ENCODE measurements at regions of chr10 and their contacts with region 1.

Region 1: GRCh38 chr10:49538381-49539319 is at the start of gene ERCC6:
- DNase-seq: peak; percentile 100
- ATAC-seq: peak; percentile 92
- H3K4me3 ChIP-seq: peak within 1 kb of the TSS; percentile 75
- H3K27ac ChIP-seq: peak within 1 kb of the TSS; percentile 75
- H3K4me1 ChIP-seq: peaks cover 49% of the 10 kb centered on the region
- H3K27me3 ChIP-seq: no peaks in the 10 kb centered on the region
- CTCF ChIP-seq: peak; percentile 36; the same call in 1 of the 2 replicates
- total RNA-seq, gene ERCC6: 36.7 and 43.0 TPM in 2 replicates

Region 2: GRCh38 chr10:49071160-49071761 is 467.4 kb before region 1 on chr10:
- CTCF ChIA-PET with region 1: no interaction called
- POLR2A ChIA-PET with region 1: no interaction called
- intact Hi-C with region 1: no loop called
- DNase-seq: no peak
- ATAC-seq: no peak
- H3K4me3 ChIP-seq: no peak overlapping the region
- H3K27ac ChIP-seq: no peak overlapping the region
- H3K4me1 ChIP-seq: no peaks in the 10 kb centered on the region
- H3K27me3 ChIP-seq: peaks cover 37% of the 10 kb centered on the region
- CTCF ChIP-seq: no peak

Region 3: DNA sequence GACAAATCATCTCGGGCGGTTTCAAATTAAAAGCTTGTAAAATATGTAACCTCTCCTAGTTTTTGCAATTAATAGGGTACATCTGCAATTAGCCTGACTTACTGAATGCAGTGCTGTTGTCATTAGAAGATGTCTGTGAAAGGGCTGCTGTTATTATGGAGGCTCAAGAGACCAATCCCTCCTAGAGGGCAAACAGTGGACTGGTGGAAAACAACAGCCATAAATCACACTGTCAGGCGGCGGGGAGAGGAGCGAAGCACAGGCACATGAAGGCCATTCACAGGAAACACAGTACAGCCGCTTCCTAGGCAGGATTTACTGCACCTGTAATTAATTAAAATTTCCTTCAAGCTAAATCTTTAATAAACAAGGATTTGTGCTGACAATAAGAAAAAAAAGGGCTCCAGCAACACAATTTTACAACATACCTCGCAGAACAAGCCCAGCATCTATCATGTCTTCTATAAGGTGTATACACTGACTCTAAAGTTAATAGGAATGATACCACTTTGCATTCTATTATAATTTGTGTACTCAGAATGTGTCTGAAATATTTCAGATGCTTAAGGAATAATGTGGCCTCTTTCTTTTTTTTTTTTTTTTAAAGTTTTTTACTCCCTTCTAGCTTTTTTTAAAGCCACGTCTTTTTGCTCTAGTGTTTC is 50.5 kb before region 1 on chr10:
- CTCF ChIA-PET with region 1: no interaction called
- POLR2A ChIA-PET with region 1: interaction called, 13 read pairs
- intact Hi-C with region 1: no loop called
- DNase-seq: no peak
- ATAC-seq: no peak
- H3K4me3 ChIP-seq: no peak overlapping the region
- H3K27ac ChIP-seq: no peak overlapping the region
- H3K4me1 ChIP-seq: no peaks in the 10 kb centered on the region
- H3K27me3 ChIP-seq: no peaks in the 10 kb centered on the region
- CTCF ChIP-seq: no peak

Region 4: GRCh38 chr10:49552249-49552672 is 13.6 kb after region 1 on chr10:
- CTCF ChIA-PET with region 1: interaction called, 11 read pairs
- POLR2A ChIA-PET with region 1: interaction called, 34 read pairs
- intact Hi-C with region 1: loop called (anchors 1 kb)
- DNase-seq: peak; percentile 100
- ATAC-seq: peak; percentile 83
- H3K4me3 ChIP-seq: peak overlapping the region; percentile 6
- H3K27ac ChIP-seq: peak overlapping the region; percentile 89
- H3K4me1 ChIP-seq: peaks cover 44% of the 10 kb centered on the region
- H3K27me3 ChIP-seq: no peaks in the 10 kb centered on the region
- CTCF ChIP-seq: no peak

Region 5: DNA sequence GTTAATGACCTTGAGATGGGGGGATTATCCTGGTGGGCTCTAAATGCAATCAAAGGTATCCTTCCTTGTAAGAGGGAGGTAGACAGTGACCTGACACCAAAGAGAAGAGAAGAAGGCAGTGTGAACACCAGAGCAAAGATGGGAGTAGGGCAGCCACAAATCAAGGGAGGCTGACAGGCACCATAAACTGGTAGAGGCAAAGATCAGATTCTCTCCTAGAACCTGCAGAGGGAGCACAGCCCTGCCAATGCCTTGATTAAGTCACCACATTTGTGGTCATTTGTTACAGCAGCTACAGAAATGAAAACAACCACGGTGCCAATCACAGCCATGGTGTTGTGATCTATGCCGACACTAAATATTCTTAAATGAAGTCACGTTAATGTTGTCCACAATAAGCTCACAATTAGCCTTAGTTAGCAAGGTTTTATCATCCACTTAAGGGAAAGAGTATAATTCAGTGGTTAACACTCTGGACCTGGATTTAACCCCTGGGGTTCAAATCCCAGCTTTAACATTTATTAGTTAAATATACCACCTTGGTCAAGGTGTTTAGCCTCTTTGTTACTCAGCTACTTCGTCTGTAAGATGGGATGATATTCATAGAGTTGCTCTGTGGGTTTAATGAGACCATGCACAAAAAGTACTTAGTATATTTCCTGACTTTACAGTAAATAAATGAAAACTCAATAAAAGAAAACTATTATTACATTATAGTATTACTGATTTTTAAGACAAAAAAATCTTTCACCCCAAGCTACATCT is 1014.3 kb after region 1 on chr10:
- CTCF ChIA-PET with region 1: no interaction called
- POLR2A ChIA-PET with region 1: interaction called, 10 read pairs
- intact Hi-C with region 1: no loop called
- DNase-seq: peak; percentile 66
- ATAC-seq: peak; percentile 83
- H3K4me3 ChIP-seq: no peak overlapping the region
- H3K27ac ChIP-seq: no peak overlapping the region
- H3K4me1 ChIP-seq: no peaks in the 10 kb centered on the region
- H3K27me3 ChIP-seq: no peaks in the 10 kb centered on the region
- CTCF ChIP-seq: peak; percentile 86